Gastrocnemius medialis (tissue), 4 donors: ENCODE measurements at regions of chr15 and their contacts with region 1.

Region 1: GRCh38 chr15:82749951-82750830 is 40.5 kb upstream of the AP3B2 start:
- DNase-seq: peak; percentile 91 to 94
- ATAC-seq: peak; percentile 91 to 96
- H3K4me3 ChIP-seq: peak overlapping the region; percentile 66 to 86 (median 80)
- H3K27ac ChIP-seq: peak overlapping the region; percentile 88 to 96 (median 93)
- H3K4me1 ChIP-seq: peaks cover 40 to 45% of the 10 kb centered on the region in 2 donors
- H3K27me3 ChIP-seq: no peaks in the 10 kb centered on the region
- CTCF ChIP-seq: no peak
- POLR2A ChIP-seq: peak; percentile 98 to 99

Region 2: DNA sequence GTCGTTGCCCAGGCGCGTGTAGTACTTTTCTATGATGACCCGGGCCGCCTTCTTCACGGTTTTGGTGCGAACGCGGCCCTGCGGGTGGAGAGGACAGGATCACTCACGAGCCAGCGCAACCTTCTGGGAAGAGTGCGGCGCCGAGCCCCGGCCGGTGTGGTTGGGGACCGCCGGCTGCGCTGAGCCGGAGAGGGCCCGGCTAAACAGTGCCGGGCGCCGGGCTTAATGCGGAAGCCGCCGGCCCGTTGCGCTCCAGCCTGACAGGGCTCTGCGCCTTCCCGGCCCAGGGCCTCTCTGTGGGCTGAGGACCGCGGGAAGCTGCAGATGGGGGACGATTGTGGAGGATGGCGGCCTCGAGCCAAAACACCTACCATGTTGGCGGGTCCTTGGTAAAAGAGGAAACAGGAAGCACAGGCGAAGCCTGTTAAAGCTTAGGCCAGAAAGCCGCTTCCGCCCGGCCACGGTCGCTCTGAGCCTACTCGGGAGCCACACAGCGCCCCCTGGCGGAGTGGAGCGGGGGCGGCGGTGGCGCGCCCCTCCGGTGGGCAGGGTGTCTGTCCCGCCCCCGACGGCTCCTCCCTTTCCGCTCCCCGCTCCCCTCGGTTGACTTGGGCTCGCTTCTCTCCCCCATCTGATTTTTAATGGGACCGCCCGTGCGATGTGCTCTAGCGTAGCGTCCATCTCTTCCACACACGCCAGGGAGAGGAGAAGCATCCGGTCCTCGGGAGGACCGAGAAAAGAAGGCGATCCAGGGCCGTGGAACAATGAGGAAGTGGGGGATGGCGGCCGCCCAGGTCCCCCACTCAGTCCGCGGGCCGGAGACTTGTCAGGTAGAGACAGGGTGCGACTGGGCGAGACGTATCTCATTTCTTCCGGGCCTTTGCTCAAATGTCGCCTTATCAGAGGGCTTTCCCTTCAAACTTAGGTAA is 209.9 kb before region 1 on chr15 and contains the start of gene RPS17:
- in situ Hi-C with region 1: loop called in 1 of 4 experiments (anchors 25 kb)
- intact Hi-C with region 1: loop called (anchors 2 kb)
- DNase-seq: peak; percentile 89 to 94
- ATAC-seq: peak; percentile 91 to 95
- H3K4me3 ChIP-seq: peak within 1 kb of the TSS; percentile 82 to 88 (median 85)
- H3K27ac ChIP-seq: peak within 1 kb of the TSS; percentile 80 to 91 (median 83)
- H3K4me1 ChIP-seq: peaks cover 8 to 11% of the 10 kb centered on the region in 2 donors
- H3K27me3 ChIP-seq: no peaks in the 10 kb centered on the region
- CTCF ChIP-seq: peak; percentile 99 to 100 (median 99)
- POLR2A ChIP-seq: peak; percentile 85 to 91
- total RNA-seq, gene RPS17: 1,547 to 2,112 (median 1,667) TPM

Region 3: GRCh38 chr15:82571722-82572222 is 178.4 kb before region 1 on chr15:
- in situ Hi-C with region 1: loop called in 1 of 4 experiments (anchors 25 kb)
- intact Hi-C with region 1: no loop called
- DNase-seq: peak; percentile 10 to 25
- ATAC-seq: peak; percentile 33 to 68
- H3K4me3 ChIP-seq: peak overlapping the region; percentile 22 to 39 (median 34)
- H3K27ac ChIP-seq: peak overlapping the region in 2 of 4 donors; percentile 14 to 29
- H3K4me1 ChIP-seq: no peaks in the 10 kb centered on the region
- H3K27me3 ChIP-seq: no peaks in the 10 kb centered on the region
- CTCF ChIP-seq: no peak
- POLR2A ChIP-seq: peak in 1 of 2 donors; percentile 25